SK-N-SH (cell line): ENCODE measurements at regions of chr17 and their contacts with region 1.

Region 1: DNA sequence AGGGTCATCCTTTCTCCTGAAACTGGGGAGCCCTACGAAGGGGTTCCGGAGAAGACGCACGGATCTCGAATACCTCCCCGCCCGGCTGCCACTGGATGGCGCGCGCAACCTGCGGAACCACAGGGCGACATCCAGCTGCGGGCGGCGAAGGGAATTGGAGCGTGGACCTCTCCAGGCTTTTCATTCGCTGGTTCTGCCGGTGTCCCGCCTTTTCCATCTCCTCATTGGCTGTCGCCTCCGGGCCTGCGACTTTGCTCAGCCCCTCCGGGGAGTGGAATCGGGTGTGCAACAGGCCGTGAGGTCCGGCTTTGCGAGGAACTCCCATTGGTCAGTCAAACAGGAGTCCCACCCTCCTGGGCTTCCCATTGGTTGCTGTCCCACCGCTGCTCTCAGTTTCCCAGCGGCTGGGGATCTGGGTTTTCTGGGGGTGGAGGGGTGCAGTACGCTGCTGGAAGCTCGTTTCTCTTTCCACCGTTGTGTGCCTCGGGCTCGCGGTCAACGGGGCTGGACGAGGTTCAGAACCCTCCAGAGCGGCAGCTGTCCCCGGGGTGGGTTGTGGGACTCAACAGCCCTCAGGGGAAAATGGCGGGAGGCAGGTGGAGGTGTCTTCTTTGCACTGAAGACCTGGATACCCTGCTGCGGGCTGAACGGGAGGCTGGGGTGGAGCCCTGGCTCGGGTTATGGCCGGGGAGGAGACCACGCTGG is 14.5 kb downstream of the OR1D5 start:
- DNase-seq: peak; percentile 92
- H3K4me3 ChIP-seq: peak overlapping the region; percentile 92 to 97
- H3K27ac ChIP-seq: peak overlapping the region in 1 of 2 experiments; percentile 83; a peak in 2 of 4 replicates
- H3K4me1 ChIP-seq: peaks cover 0 to 5% of the 10 kb centered on the region in 2 experiments; a peak in 1 of 4 replicates
- H3K27me3 ChIP-seq: no peaks in the 10 kb centered on the region
- CTCF ChIP-seq: peak; percentile 72
- EP300 ChIP-seq: no peak
- RAD21 ChIP-seq: peak; percentile 85

Region 2: GRCh38 chr17:3002538-3003295 is 46.2 kb before region 1 on chr17:
- CTCF ChIA-PET with region 1: no interaction called
- POLR2A ChIA-PET with region 1: no interaction called
- DNase-seq: no peak
- H3K4me3 ChIP-seq: no peak overlapping the region
- H3K27ac ChIP-seq: peak overlapping the region; percentile 88 to 96
- H3K4me1 ChIP-seq: peaks cover 39 to 42% of the 10 kb centered on the region in 2 experiments
- H3K27me3 ChIP-seq: no peaks in the 10 kb centered on the region
- CTCF ChIP-seq: no peak
- EP300 ChIP-seq: no peak
- RAD21 ChIP-seq: no peak

Region 3: GRCh38 chr17:3030096-3030495 is 18.8 kb before region 1 on chr17:
- CTCF ChIA-PET with region 1: interaction called, 18 read pairs
- POLR2A ChIA-PET with region 1: interaction called, 4 read pairs
- DNase-seq: no peak
- H3K4me3 ChIP-seq: no peak overlapping the region
- H3K27ac ChIP-seq: peak overlapping the region in 1 of 2 experiments; percentile 61; a peak in 2 of 4 replicates
- H3K4me1 ChIP-seq: peaks cover 0 to 5% of the 10 kb centered on the region in 2 experiments; a peak in 2 of 4 replicates
- H3K27me3 ChIP-seq: no peaks in the 10 kb centered on the region
- CTCF ChIP-seq: no peak
- EP300 ChIP-seq: no peak
- RAD21 ChIP-seq: no peak

Region 4: GRCh38 chr17:3647769-3648555 is 599.0 kb after region 1 on chr17:
- CTCF ChIA-PET with region 1: interaction called, 35 read pairs
- POLR2A ChIA-PET with region 1: no interaction called
- DNase-seq: peak; percentile 71
- H3K4me3 ChIP-seq: no peak overlapping the region
- H3K27ac ChIP-seq: no peak overlapping the region
- H3K4me1 ChIP-seq: no peaks in the 10 kb centered on the region
- H3K27me3 ChIP-seq: no peaks in the 10 kb centered on the region
- CTCF ChIP-seq: peak; percentile 61
- EP300 ChIP-seq: no peak
- RAD21 ChIP-seq: peak; percentile 58